Common myeloid progenitor, CD34-positive (primary cell): ENCODE measurements at regions of chr17 and their contacts with region 1.

Region 1: GRCh38 chr17:29252101-29252866 is 5.6 kb downstream of the CRYBA1 start:
- DNase-seq: peak; percentile 38 to 66 (median 65)
- H3K4me3 ChIP-seq: no peak overlapping the region
- H3K27ac ChIP-seq: no peak overlapping the region
- H3K4me1 ChIP-seq: no peaks in the 10 kb centered on the region
- H3K27me3 ChIP-seq: no peaks in the 10 kb centered on the region

Region 2: GRCh38 chr17:29241015-29241963 is 11.0 kb before region 1 on chr17:
- CTCF ChIA-PET with region 1: interaction called, 22 read pairs
- POLR2A ChIA-PET with region 1: interaction called, 4 read pairs
- DNase-seq: peak; percentile 22 to 63 (median 57)
- H3K4me3 ChIP-seq: no peak overlapping the region
- H3K27ac ChIP-seq: no peak overlapping the region
- H3K4me1 ChIP-seq: peaks cover 0 to 32% (median 3%) of the 10 kb centered on the region in 4 experiments
- H3K27me3 ChIP-seq: no peaks in the 10 kb centered on the region

Region 3: GRCh38 chr17:29291163-29291752 is 39.0 kb after region 1 on chr17:
- CTCF ChIA-PET with region 1: interaction called, 10 read pairs
- POLR2A ChIA-PET with region 1: interaction called, 3 read pairs
- DNase-seq: peak; percentile 73 to 86 (median 85)
- H3K4me3 ChIP-seq: peak overlapping the region in 6 of 7 experiments; percentile 78 to 100 (median 96)
- H3K27ac ChIP-seq: peak overlapping the region in 1 of 2 experiments; percentile 92
- H3K4me1 ChIP-seq: peaks cover 12 to 42% (median 31%) of the 10 kb centered on the region in 4 experiments
- H3K27me3 ChIP-seq: no peaks in the 10 kb centered on the region

Region 4: DNA sequence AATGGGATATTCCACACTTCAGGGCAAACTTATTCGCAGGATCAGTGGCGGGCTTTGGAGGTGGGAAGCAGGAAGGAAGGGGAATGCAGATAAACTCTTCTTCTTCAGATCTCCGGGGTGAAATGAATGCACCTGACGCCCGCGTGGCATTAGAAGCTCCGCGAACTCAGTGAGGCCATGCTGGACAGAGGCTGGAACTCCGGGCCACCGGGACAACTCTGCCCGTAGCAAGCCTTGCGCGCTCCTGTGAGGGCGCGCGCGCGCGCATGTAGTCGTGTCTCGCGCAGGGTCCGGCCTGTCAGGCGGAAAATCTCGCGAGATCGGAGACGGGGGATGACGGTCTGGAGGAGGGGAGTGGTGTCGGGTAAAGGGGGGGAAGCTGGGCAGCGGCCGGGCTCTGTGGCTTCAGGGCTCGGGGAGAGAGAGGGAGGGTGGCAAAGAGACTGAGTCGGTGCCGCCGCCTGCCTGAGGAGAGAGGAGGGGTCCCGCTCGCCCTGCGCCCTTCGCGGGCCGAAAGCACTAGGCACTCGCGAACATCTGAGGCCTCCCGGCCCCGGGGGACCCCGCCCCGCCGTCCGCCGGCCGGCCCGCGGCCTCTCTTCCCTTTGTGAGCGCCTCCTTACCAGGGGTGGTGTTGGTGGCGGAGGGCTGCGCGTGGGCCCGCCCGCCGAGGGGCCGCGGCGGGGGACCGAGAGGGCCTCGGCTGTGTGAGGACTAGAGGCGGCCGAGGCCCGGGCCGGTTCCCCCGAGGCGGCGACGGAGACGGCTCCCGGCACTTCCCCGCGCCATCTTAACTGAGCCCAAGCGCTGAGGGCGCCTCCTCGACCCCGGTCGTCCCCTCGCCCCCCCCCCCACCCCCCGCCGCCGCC is 137.9 kb after region 1 on chr17 and contains the start of gene TAOK1:
- CTCF ChIA-PET with region 1: no interaction called
- POLR2A ChIA-PET with region 1: no interaction called
- DNase-seq: peak; percentile 98 to 99 (median 98)
- H3K4me3 ChIP-seq: peak within 1 kb of the TSS; percentile 74 to 99 (median 93)
- H3K27ac ChIP-seq: peak within 1 kb of the TSS; percentile 94 to 98
- H3K4me1 ChIP-seq: peaks cover 2 to 27% (median 16%) of the 10 kb centered on the region in 4 experiments
- H3K27me3 ChIP-seq: no peaks in the 10 kb centered on the region